ENCODE measurements at regions of chr4 and their contacts with region 1.

Region 1: DNA sequence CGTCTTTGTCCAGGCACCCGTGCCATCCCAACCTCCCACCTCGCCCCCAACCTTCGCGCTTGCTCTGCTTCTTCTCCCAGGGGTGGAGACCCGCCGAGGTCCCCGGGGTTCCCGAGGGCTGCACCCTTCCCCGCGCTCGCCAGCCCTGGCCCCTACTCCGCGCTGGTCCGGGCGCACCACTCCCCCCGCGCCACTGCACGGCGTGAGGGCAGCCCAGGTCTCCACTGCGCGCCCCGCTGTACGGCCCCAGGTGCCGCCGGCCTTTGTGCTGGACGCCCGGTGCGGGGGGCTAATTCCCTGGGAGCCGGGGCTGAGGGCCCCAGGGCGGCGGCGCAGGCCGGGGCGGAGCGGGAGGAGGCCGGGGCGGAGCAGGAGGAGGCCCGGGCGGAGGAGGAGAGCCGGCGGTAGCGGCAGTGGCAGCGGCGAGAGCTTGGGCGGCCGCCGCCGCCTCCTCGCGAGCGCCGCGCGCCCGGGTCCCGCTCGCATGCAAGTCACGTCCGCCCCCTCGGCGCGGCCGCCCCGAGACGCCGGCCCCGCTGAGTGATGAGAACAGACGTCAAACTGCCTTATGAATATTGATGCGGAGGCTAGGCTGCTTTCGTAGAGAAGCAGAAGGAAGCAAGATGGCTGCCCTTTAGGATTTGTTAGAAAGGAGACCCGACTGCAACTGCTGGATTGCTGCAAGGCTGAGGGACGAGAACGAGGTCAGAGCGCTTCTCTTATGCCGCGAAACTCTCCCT is at the start of gene TET2:
- DNase-seq: peak; percentile 92
- ATAC-seq: peak; percentile 93
- H3K4me3 ChIP-seq: peak within 1 kb of the TSS; percentile 77
- H3K27ac ChIP-seq: peak within 1 kb of the TSS; percentile 92
- H3K4me1 ChIP-seq: peaks cover 15% of the 10 kb centered on the region
- H3K27me3 ChIP-seq: no peaks in the 10 kb centered on the region
- CTCF ChIP-seq: no peak
- total RNA-seq, gene TET2: 30.0 TPM

Region 2: GRCh38 chr4:105471566-105472176 is 325.2 kb after region 1 on chr4:
- intact Hi-C with region 1: loop called (anchors 10 kb)
- DNase-seq: no peak
- ATAC-seq: peak; percentile 60
- H3K4me3 ChIP-seq: peak overlapping the region; percentile 93
- H3K27ac ChIP-seq: peak overlapping the region; percentile 17
- H3K4me1 ChIP-seq: peaks cover 29% of the 10 kb centered on the region
- H3K27me3 ChIP-seq: no peaks in the 10 kb centered on the region
- CTCF ChIP-seq: peak; percentile 72

Measured in upper lobe of right lung (tissue), 1 donor.